ENCODE measurements at regions of chr5 and their contacts with region 1.

Region 1: GRCh38 chr5:149161026-149161687 is 19.9 kb downstream of the ABLIM3 start:
- DNase-seq: no peak
- H3K4me3 ChIP-seq: no peak overlapping the region
- H3K27ac ChIP-seq: peak overlapping the region in 1 of 4 donors; percentile 27
- H3K4me1 ChIP-seq: no peaks in the 10 kb centered on the region
- H3K27me3 ChIP-seq: no peaks in the 10 kb centered on the region
- CTCF ChIP-seq: no peak
- EP300 ChIP-seq: no peak
- POLR2A ChIP-seq: no peak

Region 2: DNA sequence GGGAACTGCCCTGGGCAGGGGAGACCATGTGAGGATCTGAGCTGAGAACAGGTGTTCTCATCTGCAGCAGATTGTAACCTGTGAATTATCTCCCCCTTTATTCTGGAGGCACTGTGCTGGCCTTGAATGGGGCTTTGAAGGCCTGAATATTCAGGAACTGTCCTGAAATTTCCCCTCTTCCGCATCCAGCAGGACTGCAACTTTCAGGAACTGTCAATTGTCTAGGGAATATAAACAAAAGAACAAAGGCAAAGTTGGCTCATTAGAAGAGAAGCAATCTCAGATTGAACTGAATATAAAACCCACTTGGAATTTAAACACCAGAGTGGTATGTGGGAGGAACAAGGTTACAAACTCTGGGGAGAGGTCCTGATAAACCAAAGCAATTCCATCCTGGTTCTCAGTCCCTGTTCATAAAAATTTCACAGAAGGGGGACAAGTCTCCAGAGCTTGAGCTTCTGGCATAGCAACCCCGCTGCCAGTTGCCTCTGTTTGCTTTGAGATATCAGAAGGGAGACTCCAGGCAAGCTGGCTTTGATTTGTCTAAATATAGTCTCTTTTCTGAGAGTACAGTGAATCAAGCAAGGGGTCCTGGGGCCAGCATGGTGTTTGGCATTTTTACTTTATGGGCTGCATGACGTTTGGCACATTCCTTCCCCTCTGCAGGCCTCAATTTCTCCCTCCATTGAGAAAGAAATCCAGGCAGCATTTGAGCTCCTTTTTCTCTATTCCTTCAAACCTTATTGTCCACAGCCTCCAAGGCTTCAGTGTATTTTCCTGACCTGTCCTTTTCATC is 287.3 kb before region 1 on chr5:
- intact Hi-C with region 1: no loop called
- DNase-seq: no peak
- H3K4me3 ChIP-seq: no peak overlapping the region
- H3K27ac ChIP-seq: no peak overlapping the region
- H3K4me1 ChIP-seq: peaks cover 0 to 13% (median 7%) of the 10 kb centered on the region in 4 donors
- H3K27me3 ChIP-seq: no peaks in the 10 kb centered on the region
- CTCF ChIP-seq: no peak
- EP300 ChIP-seq: no peak
- POLR2A ChIP-seq: no peak

Region 3: GRCh38 chr5:149089796-149090195 is 71.4 kb before region 1 on chr5:
- intact Hi-C with region 1: loop called (anchors 2 kb)
- DNase-seq: no peak
- H3K4me3 ChIP-seq: no peak overlapping the region
- H3K27ac ChIP-seq: no peak overlapping the region
- H3K4me1 ChIP-seq: no peaks in the 10 kb centered on the region
- H3K27me3 ChIP-seq: no peaks in the 10 kb centered on the region
- CTCF ChIP-seq: no peak
- EP300 ChIP-seq: no peak
- POLR2A ChIP-seq: no peak

Measured in sigmoid colon (tissue), 7 donors.